ENCODE measurements at regions of chr16 and their contacts with region 1.

Region 1: DNA sequence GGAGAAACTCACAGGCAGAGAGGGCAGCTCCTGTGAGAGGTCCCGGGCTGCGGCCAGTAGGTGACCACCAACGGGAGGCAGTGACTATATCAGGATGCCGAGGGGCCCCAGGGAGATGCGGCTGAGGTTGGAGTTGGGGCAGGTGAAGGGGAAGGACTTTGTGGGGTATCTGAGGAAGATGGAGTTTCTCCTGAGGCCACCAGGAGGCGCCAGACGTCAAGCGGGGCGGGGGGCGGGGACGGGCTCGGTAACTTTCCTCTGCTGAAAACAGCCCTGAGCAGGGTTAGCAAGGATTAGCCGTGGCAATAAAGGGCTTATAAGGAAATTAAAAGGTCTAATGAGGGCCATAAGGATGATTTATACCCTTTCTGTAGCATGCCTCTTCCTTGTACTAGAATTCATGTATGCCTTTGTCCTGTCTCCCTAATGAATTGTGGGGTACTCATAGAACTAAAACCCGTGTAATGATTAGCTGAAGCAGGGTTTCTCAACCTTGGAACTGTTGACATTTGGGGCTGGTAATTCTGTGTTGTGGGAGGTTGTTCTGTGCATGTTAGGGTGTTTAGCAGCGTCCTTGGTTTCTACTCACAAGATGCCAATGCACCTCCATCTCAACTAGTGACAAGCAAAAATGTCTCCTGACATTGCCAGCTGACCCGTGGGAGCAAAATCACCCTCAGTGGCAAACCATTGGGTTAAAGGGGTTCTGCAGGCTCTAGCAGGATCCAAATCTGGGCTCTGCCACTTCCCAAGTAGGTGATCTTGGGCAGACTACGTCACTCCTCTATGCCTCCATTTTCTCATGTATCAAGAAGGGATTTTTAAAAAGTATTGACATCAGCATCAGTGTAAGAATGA is 74.8 kb upstream of the GRIN2A start:
- DNase-seq: peak; percentile 65

Region 2: DNA sequence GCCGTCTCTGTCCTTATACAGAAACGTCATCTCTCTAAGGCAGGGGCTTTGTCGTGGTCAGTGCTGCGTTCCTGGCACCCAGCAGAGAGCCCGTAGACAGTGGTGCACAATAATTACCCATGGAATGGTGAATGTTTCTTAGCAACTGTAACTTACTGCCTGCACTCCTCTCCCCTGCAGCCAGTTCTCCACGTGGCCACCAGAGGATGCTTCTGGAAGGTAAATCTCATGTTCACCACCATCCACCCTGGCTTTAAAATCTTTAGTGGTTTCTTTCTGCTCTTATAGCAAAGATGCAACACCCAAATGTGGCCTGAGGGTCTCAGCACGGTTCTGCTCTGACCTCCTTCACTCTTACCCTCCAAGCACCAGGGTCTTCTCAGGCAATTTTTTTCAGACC is 225.5 kb before region 1 on chr16:
- in situ Hi-C with region 1: no loop called
- DNase-seq: no peak

Region 3: DNA sequence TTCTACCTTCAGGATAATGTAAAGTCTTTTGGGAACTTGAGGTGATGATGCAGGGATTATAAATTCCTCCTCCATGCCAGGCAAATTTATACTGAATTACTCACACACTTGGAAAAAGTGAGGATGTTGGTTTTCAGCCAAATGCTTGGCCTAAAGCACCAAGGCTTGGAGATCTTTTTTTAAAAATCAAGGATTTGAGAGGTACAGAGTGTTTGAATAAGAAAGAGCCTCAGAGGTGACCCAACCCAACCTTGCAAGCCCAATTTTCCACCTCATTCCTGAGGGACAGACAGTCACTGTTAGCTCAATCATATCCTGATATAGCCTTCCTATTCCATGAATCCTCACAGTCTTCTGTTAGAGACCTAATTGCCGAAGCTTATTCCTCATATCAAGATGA is 88.8 kb before region 1 on chr16:
- in situ Hi-C with region 1: no loop called
- DNase-seq: no peak

Region 4: DNA sequence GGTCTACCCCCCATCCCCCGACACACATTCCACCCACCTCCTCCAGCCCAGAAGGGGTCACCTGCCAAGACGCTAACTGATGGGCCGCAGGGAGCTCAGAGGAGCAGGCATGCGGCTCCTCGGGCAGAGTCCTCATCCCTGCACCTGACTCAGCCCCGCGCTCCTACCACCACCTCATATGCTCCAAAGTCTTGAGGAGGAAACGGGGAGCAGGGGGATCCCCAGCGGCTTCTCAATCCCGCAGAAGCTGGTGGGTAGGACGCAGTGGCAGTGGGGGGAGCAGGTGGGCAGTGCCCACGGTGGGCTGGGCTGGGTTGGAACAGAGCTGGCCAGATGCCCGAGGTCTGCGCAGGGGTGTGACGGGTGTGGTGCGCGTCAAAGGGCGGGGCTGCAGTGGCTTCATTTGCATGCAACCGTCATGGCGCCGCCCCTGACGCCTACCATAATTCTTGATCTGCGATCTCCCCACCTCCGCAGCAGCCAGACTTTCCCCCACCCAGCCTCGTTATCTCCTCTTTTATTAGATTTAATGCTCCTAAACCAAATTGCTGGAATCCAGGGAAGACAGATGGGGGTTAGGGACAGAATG is 362.3 kb after region 1 on chr16:
- in situ Hi-C with region 1: no loop called
- DNase-seq: no peak

Region 5: DNA sequence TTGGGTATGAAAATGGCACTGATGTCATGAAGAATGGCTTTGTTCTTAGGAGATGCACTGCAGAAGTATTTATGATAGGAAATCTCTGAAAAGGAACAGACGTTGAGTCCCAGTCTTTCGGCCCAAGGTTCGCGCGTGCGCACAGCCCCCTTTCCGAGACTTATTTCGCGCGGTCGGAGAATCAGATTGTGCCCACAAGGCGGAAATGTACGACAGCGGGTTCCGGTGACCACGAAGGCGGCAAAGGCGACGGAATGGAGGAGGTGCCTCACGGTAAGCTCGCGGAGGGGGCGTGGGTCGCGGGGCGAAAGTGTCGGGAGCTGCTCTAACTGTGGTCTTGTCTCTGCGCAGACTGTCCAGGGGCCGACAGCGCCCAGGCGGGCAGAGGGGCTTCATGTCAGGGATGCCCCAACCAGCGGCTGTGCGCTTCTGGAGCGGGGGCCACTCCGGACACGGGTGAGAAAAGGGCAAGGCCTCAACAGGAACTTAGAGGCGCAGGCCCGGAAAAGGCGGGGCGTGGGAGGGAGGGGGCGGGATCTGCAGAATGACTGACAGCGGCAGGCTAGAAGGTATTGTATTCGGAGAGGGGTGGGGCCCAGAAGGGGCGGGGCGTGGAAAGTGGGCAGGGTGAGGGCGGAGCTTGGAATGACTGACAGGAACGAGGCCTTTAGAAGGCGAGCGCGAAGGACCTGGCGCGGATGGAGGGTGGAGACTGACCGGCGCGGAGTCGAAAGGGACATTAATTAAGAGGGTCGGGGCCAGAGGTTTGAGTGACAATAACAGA is 486.8 kb after region 1 on chr16 and contains the start of gene NUBP1:
- in situ Hi-C with region 1: loop called (anchors 25 kb)
- DNase-seq: peak; percentile 96